Activated CD4-positive, alpha-beta memory T cell treated with anti-CD3 and anti-CD28 coated beads, Interleukin-2, amount 10 ng/mL, durations not matched to agents 7 days and 5 days (primary cell): ENCODE measurements at regions of chrX and their contacts with region 1.

Region 1: DNA sequence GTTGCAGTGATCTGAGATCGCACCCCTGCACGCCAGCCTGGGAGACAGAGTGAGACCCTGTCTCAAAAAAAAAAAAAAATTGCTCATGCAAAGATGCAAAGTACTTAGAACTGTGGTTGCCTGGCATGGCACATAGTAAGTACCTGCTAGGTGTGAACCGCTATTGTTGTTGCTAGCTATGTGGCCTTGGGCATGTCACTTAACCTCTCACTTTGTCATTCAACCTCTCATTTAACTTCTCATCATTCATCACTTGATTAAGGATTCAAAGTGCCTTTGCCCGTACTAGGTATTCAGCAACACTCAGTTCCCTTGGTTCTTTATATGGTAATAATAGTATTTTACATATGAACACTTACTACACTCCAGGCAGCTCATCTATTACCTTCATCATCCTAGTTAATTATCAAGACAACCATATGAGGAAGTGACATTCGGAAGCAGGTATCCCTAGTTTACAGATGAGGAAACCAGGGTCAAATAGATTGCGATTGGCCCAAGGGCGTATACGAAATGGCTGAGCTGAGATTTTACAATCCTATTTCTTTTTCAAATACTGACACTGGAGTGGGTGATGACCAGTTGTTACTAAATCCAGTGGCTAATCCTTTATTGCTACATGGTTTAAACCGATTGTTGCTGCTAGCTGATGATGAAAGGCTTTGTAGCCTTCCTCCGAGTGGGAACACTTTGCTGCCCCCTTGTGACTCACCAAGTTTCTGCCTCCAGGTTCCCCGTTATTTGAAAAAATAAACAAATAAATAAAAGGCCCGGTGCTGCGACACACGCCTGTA is 28.8 kb upstream of the SOWAHD start:
- DNase-seq: peak; percentile 71
- H3K4me3 Mint-ChIP-seq: no peak overlapping the region
- H3K27ac Mint-ChIP-seq: no peak overlapping the region
- H3K4me1 Mint-ChIP-seq: peaks cover 6% of the 10 kb centered on the region
- H3K27me3 Mint-ChIP-seq: no peaks in the 10 kb centered on the region

Region 2: DNA sequence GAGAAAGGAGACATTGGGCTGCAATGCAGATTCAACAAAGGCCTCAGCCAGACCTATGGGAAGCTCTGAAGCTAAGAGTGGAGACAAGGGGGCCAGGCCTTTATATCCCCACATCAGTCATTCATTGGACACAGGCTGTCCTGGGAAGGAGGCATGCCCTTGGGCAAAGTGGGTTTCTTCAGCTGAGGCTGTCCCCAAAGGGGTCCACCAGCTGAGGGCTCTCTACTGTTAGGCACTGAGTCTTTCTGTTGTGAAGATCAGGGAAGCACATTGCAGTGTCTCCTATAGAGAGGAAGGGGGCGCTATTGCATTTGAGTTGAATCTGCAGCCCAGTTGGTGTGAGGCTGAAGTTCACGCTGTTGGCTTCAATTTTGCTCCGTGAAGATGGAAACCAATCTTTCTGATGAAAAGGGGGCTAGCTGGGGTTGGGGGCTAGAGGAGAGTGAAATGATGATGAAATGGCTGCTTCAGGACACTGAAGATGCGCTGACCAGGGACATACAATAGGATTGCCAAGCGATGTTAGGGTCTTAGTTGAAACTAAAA is 213.4 kb before region 1 on chrX:
- CTCF ChIA-PET with region 1: interaction called, 35 read pairs
- POLR2A ChIA-PET with region 1: no interaction called
- DNase-seq: peak; percentile 41
- H3K4me3 Mint-ChIP-seq: no peak overlapping the region
- H3K27ac Mint-ChIP-seq: no peak overlapping the region
- H3K4me1 Mint-ChIP-seq: peaks cover 4% of the 10 kb centered on the region
- H3K27me3 Mint-ChIP-seq: no peaks in the 10 kb centered on the region

Region 3: GRCh38 chrX:119606280-119607015 is 123.2 kb before region 1 on chrX and contains the start of gene NKRF:
- CTCF ChIA-PET with region 1: interaction called, 20 read pairs
- POLR2A ChIA-PET with region 1: interaction called, 5 read pairs
- DNase-seq: peak; percentile 92
- H3K4me3 Mint-ChIP-seq: peak within 1 kb of the TSS; percentile 92
- H3K27ac Mint-ChIP-seq: peak within 1 kb of the TSS; percentile 90
- H3K4me1 Mint-ChIP-seq: peaks cover 42% of the 10 kb centered on the region
- H3K27me3 Mint-ChIP-seq: peaks cover 9% of the 10 kb centered on the region
- total RNA-seq, gene NKRF: 13.8 to 14.7 TPM

Region 4: DNA sequence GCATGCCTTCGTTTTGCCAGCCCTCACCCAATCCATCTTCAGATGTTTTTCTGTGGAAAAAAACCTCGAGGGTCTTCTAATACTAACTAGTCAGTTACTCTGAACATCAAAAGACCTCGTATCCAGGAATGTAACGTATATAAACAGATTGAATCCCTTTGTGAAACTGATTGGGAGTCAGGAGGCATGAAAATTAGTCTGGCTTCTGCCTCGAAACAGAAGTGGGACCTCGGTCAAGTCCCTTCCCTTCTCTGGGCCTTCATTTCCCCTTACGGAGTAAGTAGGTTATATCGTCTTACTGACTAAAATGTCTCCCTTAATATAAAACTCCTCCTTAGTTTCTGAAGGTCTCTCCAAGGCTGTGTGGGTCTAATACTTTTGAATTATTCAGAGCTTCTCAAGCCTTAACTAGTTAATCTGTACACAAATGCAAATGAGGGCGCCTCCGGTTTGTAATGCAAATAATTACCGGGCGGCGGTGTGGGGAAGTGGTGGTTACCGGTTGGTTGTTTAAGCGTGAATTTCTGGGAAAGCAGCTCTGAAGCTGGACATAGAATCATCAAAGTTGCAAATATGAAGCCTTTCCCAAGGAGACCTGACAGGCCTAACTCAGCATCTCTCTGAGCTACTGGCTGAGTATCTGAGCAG is 112.0 kb before region 1 on chrX:
- CTCF ChIA-PET with region 1: interaction called, 13 read pairs
- POLR2A ChIA-PET with region 1: interaction called, 3 read pairs
- DNase-seq: no peak
- H3K4me3 Mint-ChIP-seq: no peak overlapping the region
- H3K27ac Mint-ChIP-seq: no peak overlapping the region
- H3K4me1 Mint-ChIP-seq: no peaks in the 10 kb centered on the region
- H3K27me3 Mint-ChIP-seq: no peaks in the 10 kb centered on the region

Region 5: GRCh38 chrX:119676949-119677653 is 52.5 kb before region 1 on chrX:
- CTCF ChIA-PET with region 1: interaction called, 10 read pairs
- POLR2A ChIA-PET with region 1: no interaction called
- DNase-seq: no peak
- H3K4me3 Mint-ChIP-seq: peak overlapping the region; percentile 78
- H3K27ac Mint-ChIP-seq: peak overlapping the region; percentile 99
- H3K4me1 Mint-ChIP-seq: peaks cover 55% of the 10 kb centered on the region
- H3K27me3 Mint-ChIP-seq: no peaks in the 10 kb centered on the region

Region 6: GRCh38 chrX:119698845-119699244 is 30.8 kb before region 1 on chrX:
- CTCF ChIA-PET with region 1: interaction called, 45 read pairs
- POLR2A ChIA-PET with region 1: interaction called, 48 read pairs
- DNase-seq: no peak
- H3K4me3 Mint-ChIP-seq: no peak overlapping the region
- H3K27ac Mint-ChIP-seq: no peak overlapping the region
- H3K4me1 Mint-ChIP-seq: peaks cover 7% of the 10 kb centered on the region
- H3K27me3 Mint-ChIP-seq: no peaks in the 10 kb centered on the region

Region 7: GRCh38 chrX:120244735-120245498 is 515.3 kb after region 1 on chrX:
- CTCF ChIA-PET with region 1: no interaction called
- POLR2A ChIA-PET with region 1: no interaction called
- DNase-seq: peak; percentile 66
- H3K4me3 Mint-ChIP-seq: peak overlapping the region; percentile 91
- H3K27ac Mint-ChIP-seq: peak overlapping the region; percentile 81
- H3K4me1 Mint-ChIP-seq: peaks cover 28% of the 10 kb centered on the region
- H3K27me3 Mint-ChIP-seq: no peaks in the 10 kb centered on the region